Activated CD8-positive, alpha-beta T cell treated with anti-CD3 and anti-CD28 coated beads for 36 hours (primary cell): ENCODE measurements at regions of chr7 and their contacts with region 1.

Region 1: GRCh38 chr7:10804770-10805169 is 168.9 kb upstream of the PHF14 start:
- DNase-seq: no peak
- ATAC-seq: no peak
- H3K4me3 Mint-ChIP-seq: no peak overlapping the region
- H3K27ac Mint-ChIP-seq: no peak overlapping the region
- H3K4me1 Mint-ChIP-seq: no peaks in the 10 kb centered on the region
- H3K27me3 Mint-ChIP-seq: no peaks in the 10 kb centered on the region
- CTCF ChIP-seq: no peak

Region 2: GRCh38 chr7:10266976-10267375 is 537.8 kb before region 1 on chr7:
- CTCF ChIA-PET with region 1: no interaction called
- POLR2A ChIA-PET with region 1: no interaction called
- intact Hi-C with region 1: loop called (anchors 5 kb)
- DNase-seq: no peak
- ATAC-seq: no peak
- H3K4me3 Mint-ChIP-seq: no peak overlapping the region
- H3K27ac Mint-ChIP-seq: no peak overlapping the region
- H3K4me1 Mint-ChIP-seq: no peaks in the 10 kb centered on the region
- H3K27me3 Mint-ChIP-seq: no peaks in the 10 kb centered on the region
- CTCF ChIP-seq: no peak

Region 3: DNA sequence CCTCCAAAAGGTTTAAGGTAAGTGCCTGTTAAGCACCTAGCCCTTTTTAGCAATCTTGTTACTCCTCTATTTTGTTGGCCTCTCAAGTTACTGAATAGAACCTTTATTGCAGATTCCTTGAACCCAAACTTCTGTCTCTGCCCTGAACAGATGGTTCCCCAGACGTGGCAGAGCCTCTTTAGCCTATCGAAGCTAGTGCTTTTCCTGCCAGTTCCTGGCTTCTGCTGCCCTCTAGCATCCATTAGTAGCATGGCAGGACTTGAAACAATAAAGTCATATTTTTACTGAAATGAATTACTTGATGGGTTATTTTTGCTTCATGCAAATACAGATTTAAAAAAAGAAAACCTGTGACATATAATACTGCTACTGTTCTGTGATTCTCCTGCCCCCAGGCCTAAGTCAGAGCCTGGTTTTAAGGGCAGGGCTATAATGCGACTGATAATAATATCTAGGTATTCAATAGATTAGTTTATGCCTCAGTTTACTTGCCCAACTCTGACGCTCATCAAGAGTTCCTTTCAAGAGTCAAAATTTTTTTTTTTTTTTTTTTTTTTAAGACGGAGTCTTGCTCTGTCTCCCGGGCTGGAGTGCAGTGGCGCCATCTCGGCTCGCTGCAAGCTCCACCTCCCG is 84.6 kb after region 1 on chr7:
- CTCF ChIA-PET with region 1: no interaction called
- POLR2A ChIA-PET with region 1: no interaction called
- intact Hi-C with region 1: no loop called
- DNase-seq: peak; percentile 55
- ATAC-seq: peak; percentile 95
- H3K4me3 Mint-ChIP-seq: no peak overlapping the region
- H3K27ac Mint-ChIP-seq: no peak overlapping the region
- H3K4me1 Mint-ChIP-seq: peaks cover 11% of the 10 kb centered on the region
- H3K27me3 Mint-ChIP-seq: no peaks in the 10 kb centered on the region
- CTCF ChIP-seq: peak; percentile 80